GM10248 (cell line): ENCODE measurements at regions of chr17 and their contacts with region 1.

Region 1: GRCh38 chr17:47698749-47699535 is 5.0 kb downstream of the TBKBP1 start:
- DNase-seq: peak; percentile 91
- CTCF ChIP-seq: peak; percentile 86

Region 2: GRCh38 chr17:47708863-47709541 is 10.1 kb after region 1 on chr17:
- CTCF ChIA-PET with region 1: interaction called, 85 read pairs
- POLR2A ChIA-PET with region 1: no interaction called
- DNase-seq: no peak
- CTCF ChIP-seq: no peak

Region 3: GRCh38 chr17:47733047-47733673 is 34.2 kb after region 1 on chr17 and contains the start of gene TBX21:
- CTCF ChIA-PET with region 1: interaction called, 31 read pairs
- POLR2A ChIA-PET with region 1: interaction called, 8 read pairs
- DNase-seq: peak; percentile 91
- CTCF ChIP-seq: peak; percentile 36

Region 4: DNA sequence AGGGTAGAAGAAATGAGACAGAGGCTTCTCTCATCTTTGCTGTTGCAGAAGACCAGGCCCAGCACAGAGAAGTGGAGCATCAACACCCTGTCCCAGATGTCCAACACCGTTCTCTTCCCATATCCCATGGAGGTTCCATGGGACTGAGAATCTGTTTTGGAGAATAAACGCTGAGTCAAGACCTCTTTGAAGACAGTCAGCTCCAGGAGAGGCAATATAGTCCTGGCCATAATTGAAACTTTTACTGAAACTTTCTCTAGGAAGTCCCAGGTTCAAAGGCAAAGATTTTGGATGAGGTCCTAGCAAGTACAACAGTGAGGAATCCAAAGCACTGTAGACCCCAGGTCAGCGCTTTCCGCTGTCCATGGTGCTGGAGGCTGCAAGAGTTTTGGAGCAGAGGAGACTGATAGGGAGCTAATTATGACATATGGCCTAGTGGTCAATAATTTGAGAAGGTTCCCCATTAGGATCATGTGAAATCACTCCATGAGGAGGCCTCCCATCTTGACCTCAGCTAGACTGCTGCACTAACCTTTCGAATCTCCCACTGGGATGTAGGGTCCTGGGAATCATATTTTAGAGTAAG is 86.7 kb after region 1 on chr17:
- CTCF ChIA-PET with region 1: interaction called, 11 read pairs
- POLR2A ChIA-PET with region 1: no interaction called
- DNase-seq: peak; percentile 31
- CTCF ChIP-seq: no peak

Region 5: DNA sequence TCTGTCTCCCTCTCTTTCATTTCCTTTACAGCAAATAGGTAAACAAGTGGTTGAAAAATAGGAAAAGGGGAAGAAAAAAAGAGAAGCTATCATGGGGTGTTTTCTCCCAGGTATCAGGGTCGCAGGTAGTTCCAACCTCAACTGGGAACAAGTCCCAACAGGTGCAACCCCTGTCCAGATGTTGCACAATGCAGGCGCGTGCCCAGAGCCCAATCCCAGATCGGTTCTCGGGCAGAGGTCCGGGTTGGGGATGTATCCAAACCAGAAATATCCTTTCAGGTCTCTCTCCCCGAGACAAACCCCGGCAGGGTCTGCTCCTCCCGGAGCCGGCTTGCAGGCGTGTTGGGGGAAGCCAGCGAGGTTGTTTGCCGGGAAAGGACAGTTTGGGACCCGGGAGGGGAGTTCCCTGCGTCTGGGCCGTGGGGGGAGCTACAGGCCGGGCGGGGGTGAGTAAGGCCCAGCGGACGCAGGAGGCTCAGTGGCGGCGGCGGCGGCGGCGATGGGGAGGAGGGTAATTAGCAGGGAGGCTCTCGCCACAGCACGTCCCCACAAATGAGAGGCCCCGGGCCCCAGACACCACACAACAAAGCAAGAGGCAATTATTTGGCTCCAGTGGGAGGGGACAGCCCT is 173.2 kb after region 1 on chr17:
- CTCF ChIA-PET with region 1: no interaction called
- POLR2A ChIA-PET with region 1: no interaction called
- DNase-seq: no peak
- CTCF ChIP-seq: no peak